CD4-positive, alpha-beta memory T cell (primary cell): ENCODE measurements at regions of chr7 and their contacts with region 1.

Region 1: GRCh38 chr7:142632291-142633134 is 116.8 kb upstream of the PRSS1 start:
- DNase-seq: peak; percentile 47 to 68 (median 67)
- H3K4me3 ChIP-seq: no peak overlapping the region
- H3K4me3 Mint-ChIP-seq: peak overlapping the region in 4 of 8 donors; percentile 15 to 51 (median 34)
- H3K27ac ChIP-seq: no peak overlapping the region
- H3K27ac Mint-ChIP-seq: peak overlapping the region in 4 of 7 donors; percentile 35 to 82 (median 72)
- H3K4me1 ChIP-seq: peaks cover 3% of the 10 kb centered on the region
- H3K4me1 Mint-ChIP-seq: peaks cover 3 to 15% (median 8%) of the 10 kb centered on the region in 4 donors
- H3K27me3 ChIP-seq: no peaks in the 10 kb centered on the region
- H3K27me3 Mint-ChIP-seq: peaks cover 1% of the 10 kb centered on the region in 2 donors

Region 2: GRCh38 chr7:142669074-142669654 is 36.7 kb after region 1 on chr7:
- CTCF ChIA-PET with region 1: interaction called, 3 read pairs
- POLR2A ChIA-PET with region 1: interaction called, 5 read pairs
- intact Hi-C with region 1: loop called (anchors 2 kb)
- DNase-seq: peak in 4 of 5 donors; percentile 19 to 43 (median 30)
- H3K4me3 ChIP-seq: no peak overlapping the region
- H3K4me3 Mint-ChIP-seq: peak overlapping the region in 4 of 8 donors; percentile 0 to 67 (median 26)
- H3K27ac ChIP-seq: no peak overlapping the region
- H3K27ac Mint-ChIP-seq: peak overlapping the region in 5 of 7 donors; percentile 39 to 86 (median 70)
- H3K4me1 ChIP-seq: peaks cover 25% of the 10 kb centered on the region
- H3K4me1 Mint-ChIP-seq: peaks cover 19 to 30% (median 25%) of the 10 kb centered on the region in 4 donors
- H3K27me3 ChIP-seq: no peaks in the 10 kb centered on the region
- H3K27me3 Mint-ChIP-seq: no peaks in the 10 kb centered on the region

Region 3: GRCh38 chr7:142754681-142755575 is 122.4 kb after region 1 on chr7:
- CTCF ChIA-PET with region 1: no interaction called
- POLR2A ChIA-PET with region 1: no interaction called
- intact Hi-C with region 1: no loop called
- DNase-seq: no peak
- H3K4me3 ChIP-seq: no peak overlapping the region
- H3K4me3 Mint-ChIP-seq: no peak overlapping the region
- H3K27ac ChIP-seq: no peak overlapping the region
- H3K27ac Mint-ChIP-seq: peak overlapping the region in 1 of 7 donors; percentile 76
- H3K4me1 ChIP-seq: no peaks in the 10 kb centered on the region
- H3K4me1 Mint-ChIP-seq: no peaks in the 10 kb centered on the region
- H3K27me3 ChIP-seq: no peaks in the 10 kb centered on the region
- H3K27me3 Mint-ChIP-seq: no peaks in the 10 kb centered on the region

Region 4: DNA sequence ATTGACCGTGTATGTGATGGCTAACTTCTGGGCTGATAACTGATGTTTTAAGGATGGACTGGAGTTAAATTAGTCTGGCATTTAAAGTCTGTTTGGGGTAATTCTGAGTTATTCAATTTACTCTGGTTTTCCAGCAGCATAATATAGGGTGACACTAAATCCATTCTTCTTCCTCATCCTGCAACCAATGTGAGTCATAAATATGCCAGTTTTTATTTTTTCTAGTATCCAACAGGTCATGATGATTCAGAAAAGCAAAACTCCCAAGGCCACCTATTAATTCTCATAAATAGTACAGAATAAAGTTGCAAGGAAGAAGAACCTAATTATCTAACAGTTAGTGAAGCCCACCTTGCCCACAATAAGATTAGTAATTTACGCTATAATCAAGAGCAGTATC is 214.8 kb after region 1 on chr7:
- CTCF ChIA-PET with region 1: no interaction called
- POLR2A ChIA-PET with region 1: no interaction called
- intact Hi-C with region 1: no loop called
- DNase-seq: no peak
- H3K4me3 ChIP-seq: no peak overlapping the region
- H3K4me3 Mint-ChIP-seq: no peak overlapping the region
- H3K27ac ChIP-seq: no peak overlapping the region
- H3K27ac Mint-ChIP-seq: no peak overlapping the region
- H3K4me1 ChIP-seq: no peaks in the 10 kb centered on the region
- H3K4me1 Mint-ChIP-seq: no peaks in the 10 kb centered on the region
- H3K27me3 ChIP-seq: no peaks in the 10 kb centered on the region
- H3K27me3 Mint-ChIP-seq: peaks cover 6 to 8% of the 10 kb centered on the region in 2 donors